ENCODE measurements at regions of chr20 and their contacts with region 1.

Region 1: GRCh38 chr20:62305149-62305764 is 2.5 kb downstream of the ADRM1 start:
- DNase-seq: peak; percentile 73 to 91 (median 88)
- ATAC-seq: peak; percentile 18
- H3K4me3 ChIP-seq: no peak overlapping the region
- H3K27ac ChIP-seq: peak overlapping the region; percentile 43 to 99 (median 98)
- H3K4me1 ChIP-seq: peaks cover 33% of the 10 kb centered on the region
- H3K27me3 ChIP-seq: no peaks in the 10 kb centered on the region
- CTCF ChIP-seq: peak in 4 of 7 experiments; percentile 16 to 45 (median 32)
- POLR2A ChIP-seq: peak; percentile 30 to 64 (median 47)

Region 2: DNA sequence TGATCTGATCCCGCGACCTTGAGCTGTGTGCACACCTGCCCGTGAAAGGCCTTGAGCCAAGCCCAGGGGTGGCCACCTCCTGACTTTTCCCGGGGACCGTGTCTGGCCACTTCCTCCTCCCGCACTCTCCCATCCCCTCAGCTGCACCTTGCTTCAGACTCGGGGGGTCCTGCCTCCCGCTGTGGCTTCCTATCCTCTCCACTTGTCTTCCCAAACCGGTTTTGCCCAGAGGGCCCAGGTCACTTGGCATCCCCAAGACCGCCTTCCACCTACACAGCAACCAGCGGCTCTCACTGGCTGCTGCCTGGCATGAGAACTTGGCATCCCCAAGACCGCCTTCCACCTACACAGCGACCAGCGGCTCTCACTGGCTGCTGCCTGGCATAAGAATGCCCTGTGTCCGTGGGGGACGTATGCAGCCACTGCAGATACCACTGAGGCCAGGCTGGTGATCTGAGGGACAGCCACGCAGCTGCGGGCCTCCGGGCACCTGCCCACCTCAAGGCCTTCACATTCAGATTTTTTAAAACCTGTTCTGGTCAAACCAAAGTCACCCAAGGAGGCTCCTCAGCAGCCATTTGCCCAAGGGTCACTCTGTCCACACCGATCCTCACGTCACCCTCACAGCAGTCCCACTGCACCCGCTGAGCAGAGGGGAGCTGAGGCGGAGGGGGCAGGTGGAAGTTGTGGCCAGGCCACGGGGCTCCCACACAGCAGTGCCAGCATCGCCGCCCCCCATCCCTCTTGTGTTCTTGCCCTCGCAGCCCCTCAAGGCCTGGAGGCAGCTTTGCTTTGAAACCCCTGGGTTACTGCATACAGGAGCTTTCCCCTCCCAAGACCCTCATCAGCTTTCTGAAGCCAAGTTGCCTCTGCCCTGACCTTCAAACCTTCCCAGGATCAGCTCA is 485.1 kb before region 1 on chr20:
- intact Hi-C with region 1: no loop called
- DNase-seq: no peak
- ATAC-seq: no peak
- H3K4me3 ChIP-seq: no peak overlapping the region
- H3K27ac ChIP-seq: no peak overlapping the region
- H3K4me1 ChIP-seq: no peaks in the 10 kb centered on the region
- H3K27me3 ChIP-seq: no peaks in the 10 kb centered on the region
- CTCF ChIP-seq: no peak
- POLR2A ChIP-seq: no peak

Region 3: DNA sequence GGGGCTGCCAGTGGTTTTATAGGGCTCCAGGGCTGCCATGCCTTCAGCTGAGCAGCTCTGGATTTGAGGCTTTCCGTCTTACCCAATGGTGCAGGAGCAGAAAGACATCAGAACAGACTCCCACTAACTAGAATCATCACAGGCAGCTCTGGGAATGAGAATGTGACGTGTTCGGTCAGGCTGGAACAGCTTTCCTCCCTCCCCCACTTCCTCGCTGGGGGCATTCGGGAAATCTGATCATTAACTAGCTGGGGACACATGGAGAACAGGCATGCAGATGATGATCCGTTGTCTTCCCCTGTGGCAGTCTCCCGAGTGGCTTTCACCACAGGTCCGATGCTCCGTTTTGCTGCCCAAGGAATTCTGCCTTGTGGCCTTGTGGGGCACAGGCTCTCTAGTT is 128.0 kb before region 1 on chr20:
- intact Hi-C with region 1: no loop called
- DNase-seq: no peak
- ATAC-seq: no peak
- H3K4me3 ChIP-seq: no peak overlapping the region
- H3K27ac ChIP-seq: no peak overlapping the region
- H3K4me1 ChIP-seq: peaks cover 6% of the 10 kb centered on the region
- H3K27me3 ChIP-seq: no peaks in the 10 kb centered on the region
- CTCF ChIP-seq: no peak
- POLR2A ChIP-seq: no peak

Region 4: GRCh38 chr20:62382306-62383198 is 77.3 kb after region 1 on chr20:
- intact Hi-C with region 1: loop called (anchors 5 kb)
- DNase-seq: peak; percentile 86 to 91 (median 86)
- ATAC-seq: peak; percentile 74
- H3K4me3 ChIP-seq: no peak overlapping the region
- H3K27ac ChIP-seq: peak overlapping the region in 1 of 4 donors; percentile 28
- H3K4me1 ChIP-seq: peaks cover 29% of the 10 kb centered on the region
- H3K27me3 ChIP-seq: no peaks in the 10 kb centered on the region
- CTCF ChIP-seq: peak; percentile 86 to 95 (median 91)
- POLR2A ChIP-seq: no peak

Measured in body of pancreas (tissue), 4 donors.